Left ventricle myocardium superior (tissue), 1 donor: ENCODE measurements at regions of chr14 and their contacts with region 1.

Region 1: GRCh38 chr14:45134051-45134958 is at the start of gene FKBP3:
- DNase-seq: peak; percentile 97
- ATAC-seq: peak; percentile 98
- total RNA-seq, gene FKBP3: 121 TPM

Region 2: DNA sequence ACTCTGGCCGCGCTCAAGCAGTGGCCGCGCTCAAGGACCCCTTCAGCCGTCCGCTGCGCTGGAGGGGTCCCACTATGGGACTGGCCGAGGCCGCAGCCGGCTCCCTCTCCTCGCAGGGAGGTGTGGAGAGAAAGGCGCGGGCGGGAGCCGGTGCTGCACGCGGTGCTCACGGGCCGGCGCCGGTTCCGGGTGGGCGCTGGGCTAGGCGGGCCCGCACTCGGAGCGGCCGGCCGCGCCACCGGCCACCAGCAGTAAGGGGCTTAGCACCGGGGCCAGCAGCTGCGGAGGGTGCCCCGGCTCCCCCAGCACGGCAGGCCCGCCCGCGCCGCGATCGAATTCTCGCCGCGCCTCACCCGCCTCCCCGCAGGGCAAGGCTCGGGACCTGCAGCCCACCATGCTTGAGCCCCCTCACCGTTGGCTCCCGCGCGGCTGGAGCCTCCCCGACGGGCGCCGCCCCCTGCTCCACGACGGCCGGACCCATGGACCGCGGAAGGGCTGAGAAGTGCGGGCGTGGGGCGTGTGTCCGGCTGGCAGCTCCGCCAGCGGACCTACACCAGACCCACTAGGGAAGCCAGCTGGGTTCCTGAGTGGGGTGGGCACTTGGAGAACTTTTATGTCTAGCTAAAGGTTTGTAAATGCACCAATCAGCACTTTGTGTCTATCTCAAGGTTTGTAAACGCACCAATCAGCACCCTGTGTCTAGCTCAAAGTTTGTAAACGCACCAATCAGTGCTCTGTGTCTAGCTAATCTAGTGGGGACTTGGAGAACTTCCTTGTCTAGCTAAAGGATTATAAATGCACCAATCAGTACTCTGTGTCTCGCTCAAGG is 222.1 kb before region 1 on chr14:
- intact Hi-C with region 1: loop called (anchors 10 kb)
- DNase-seq: peak; percentile 42
- ATAC-seq: peak; percentile 71

Region 3: GRCh38 chr14:44961604-44962333 is 172.5 kb before region 1 on chr14 and contains the starts of genes KLHL28 and TOGARAM1:
- intact Hi-C with region 1: loop called (anchors 5 kb)
- DNase-seq: peak; percentile 93
- ATAC-seq: peak; percentile 96
- total RNA-seq, gene KLHL28: 13.0 TPM
- total RNA-seq, gene TOGARAM1: 21.9 TPM

Region 4: DNA sequence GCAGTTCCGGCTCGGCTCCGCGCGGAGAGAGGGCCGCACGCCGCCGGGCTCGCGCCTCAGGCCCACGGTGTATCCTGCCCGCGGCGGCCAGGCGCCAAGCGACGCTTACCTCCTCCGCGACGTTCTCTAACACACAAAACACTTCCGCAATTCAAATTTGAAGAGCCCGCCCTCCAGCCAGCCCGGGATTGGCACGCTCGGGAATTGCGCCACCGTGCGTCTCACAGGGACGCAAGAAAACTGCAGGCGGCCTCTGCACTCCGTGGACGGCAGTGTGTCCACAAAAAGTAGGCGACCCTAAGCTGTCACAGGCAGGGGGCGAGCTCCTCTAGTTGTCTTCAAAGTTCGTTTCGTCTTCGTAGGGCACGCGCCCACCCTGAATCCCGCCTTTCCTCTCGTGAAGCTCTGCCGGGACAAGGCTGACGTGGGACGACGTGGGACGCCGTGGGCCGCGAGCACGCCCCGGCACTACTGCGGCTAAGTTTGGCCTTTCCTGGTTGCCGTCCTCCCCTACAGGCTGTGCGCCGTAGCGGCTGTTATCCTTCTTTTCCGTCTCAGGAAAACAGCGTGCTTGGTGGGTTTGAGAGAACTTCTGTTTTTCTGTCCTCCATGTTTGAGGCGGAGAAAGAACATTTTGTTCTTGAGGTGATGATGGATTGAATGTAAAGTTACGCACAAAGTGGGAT is 118.9 kb after region 1 on chr14 and contains the start of gene MIS18BP1:
- intact Hi-C with region 1: loop called (anchors 10 kb)
- DNase-seq: peak; percentile 96
- ATAC-seq: peak; percentile 98
- total RNA-seq, gene MIS18BP1: 5.5 TPM